ENCODE measurements at regions of chr7 and their contacts with region 1.

Region 1: DNA sequence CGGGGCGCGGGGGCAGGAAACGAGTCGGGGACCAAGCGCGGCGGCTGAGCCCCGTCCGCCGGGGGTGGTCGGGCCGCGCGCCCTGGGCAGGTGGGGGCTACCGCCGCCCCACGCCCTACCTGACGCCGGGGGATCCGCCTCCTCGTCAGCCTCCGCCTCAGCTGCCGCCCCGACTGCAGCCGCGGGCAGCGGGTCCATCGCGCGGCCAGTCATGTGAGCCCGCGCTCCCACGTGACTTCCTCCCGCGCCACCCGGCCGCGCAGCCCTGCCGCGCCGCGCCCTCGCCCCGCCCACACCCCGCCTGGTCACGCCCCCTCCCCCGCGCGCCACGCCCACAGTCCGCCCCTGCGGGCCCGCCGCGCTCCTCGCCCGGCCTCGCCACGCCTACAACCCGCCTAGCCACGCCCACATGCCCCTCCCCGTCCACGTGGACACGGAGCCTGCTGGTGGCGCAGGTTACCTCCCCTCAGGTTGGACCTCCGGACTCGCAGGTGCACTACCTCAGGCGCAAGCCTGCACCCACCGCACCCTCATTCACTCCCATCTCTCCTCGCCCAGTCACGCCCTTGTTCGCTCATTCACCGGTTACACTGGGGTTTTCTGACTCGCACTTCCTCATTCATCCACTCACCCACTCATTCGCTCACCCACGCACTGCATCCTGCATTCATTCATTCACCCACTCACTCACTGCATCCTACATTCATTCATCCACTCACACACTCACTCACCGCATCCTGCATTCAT is at the start of gene SNX8:
- DNase-seq: peak; percentile 98
- ATAC-seq: peak; percentile 78
- H3K4me3 ChIP-seq: peak within 1 kb of the TSS; percentile 67 to 94 (median 81)
- H3K4me3 Mint-ChIP-seq: no peak within 1 kb of the TSS
- H3K27ac ChIP-seq: peak within 1 kb of the TSS; percentile 95 to 96
- H3K27ac Mint-ChIP-seq: peak within 1 kb of the TSS; percentile 97
- H3K4me1 ChIP-seq: peaks cover 30 to 58% of the 10 kb centered on the region in 2 donors
- H3K4me1 Mint-ChIP-seq: peaks cover 39% of the 10 kb centered on the region
- H3K27me3 ChIP-seq: no peaks in the 10 kb centered on the region
- H3K27me3 Mint-ChIP-seq: no peaks in the 10 kb centered on the region
- CTCF ChIP-seq: no peak
- total RNA-seq, gene SNX8: 126 and 144 TPM in 2 replicates

Region 2: DNA sequence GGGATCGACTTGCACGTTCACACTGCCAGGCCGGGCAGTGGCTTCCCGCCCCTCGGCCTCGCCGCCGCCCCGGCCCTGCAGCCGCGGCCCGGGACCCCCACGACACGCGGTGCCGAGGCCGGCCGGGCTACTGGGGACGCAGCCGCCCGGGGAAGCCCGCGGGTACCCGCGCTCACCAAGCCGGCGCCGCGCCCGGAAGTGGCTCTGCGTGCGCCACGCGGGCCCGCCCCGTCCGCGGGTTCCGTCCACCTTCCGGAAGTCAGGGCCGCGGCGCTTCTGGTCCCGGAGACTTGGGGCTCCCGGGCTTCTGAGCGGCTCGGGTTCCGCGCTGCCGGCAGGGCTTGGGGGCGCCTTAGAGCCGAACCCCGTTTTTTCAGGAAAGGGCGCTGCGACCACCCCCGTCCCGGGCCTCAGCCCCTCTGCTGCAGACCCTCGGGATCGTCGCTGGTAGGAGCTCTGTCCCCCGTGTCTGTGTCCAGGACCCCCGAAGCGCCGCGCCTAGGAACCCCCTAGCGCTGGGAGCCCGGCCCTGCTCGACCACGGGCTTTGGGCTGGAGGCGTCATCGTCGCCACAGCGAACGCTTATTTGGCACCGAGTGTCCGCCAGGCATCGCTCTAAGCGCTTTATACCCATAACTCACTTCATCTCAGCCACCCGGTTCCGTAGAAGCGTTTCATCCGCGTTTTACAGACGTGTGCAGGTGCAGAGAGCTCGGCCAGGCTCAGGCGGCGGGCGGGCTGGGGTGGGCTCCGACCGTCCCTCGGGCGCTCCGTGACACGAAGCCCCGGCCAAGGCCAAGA is 744.3 kb before region 1 on chr7 and contains the start of gene PSMG3:
- CTCF ChIA-PET with region 1: no interaction called
- POLR2A ChIA-PET with region 1: no interaction called
- intact Hi-C with region 1: loop called (anchors 1 kb)
- DNase-seq: peak; percentile 92
- ATAC-seq: peak; percentile 91
- H3K4me3 ChIP-seq: peak within 1 kb of the TSS; percentile 18 to 87 (median 80)
- H3K4me3 Mint-ChIP-seq: peak within 1 kb of the TSS; percentile 90
- H3K27ac ChIP-seq: peak within 1 kb of the TSS; percentile 84 to 89
- H3K27ac Mint-ChIP-seq: peak within 1 kb of the TSS; percentile 91
- H3K4me1 ChIP-seq: peaks cover 12 to 24% of the 10 kb centered on the region in 2 donors
- H3K4me1 Mint-ChIP-seq: peaks cover 20% of the 10 kb centered on the region
- H3K27me3 ChIP-seq: no peaks in the 10 kb centered on the region
- H3K27me3 Mint-ChIP-seq: no peaks in the 10 kb centered on the region
- CTCF ChIP-seq: peak; percentile 30
- total RNA-seq, gene PSMG3: 27.4 and 28.6 TPM in 2 replicates

Region 3: GRCh38 chr7:2190531-2190930 is 123.9 kb before region 1 on chr7:
- CTCF ChIA-PET with region 1: no interaction called
- POLR2A ChIA-PET with region 1: no interaction called
- intact Hi-C with region 1: no loop called
- DNase-seq: no peak
- ATAC-seq: no peak
- H3K4me3 ChIP-seq: no peak overlapping the region
- H3K4me3 Mint-ChIP-seq: no peak overlapping the region
- H3K27ac ChIP-seq: no peak overlapping the region
- H3K27ac Mint-ChIP-seq: no peak overlapping the region
- H3K4me1 ChIP-seq: no peaks in the 10 kb centered on the region
- H3K4me1 Mint-ChIP-seq: no peaks in the 10 kb centered on the region
- H3K27me3 ChIP-seq: no peaks in the 10 kb centered on the region
- H3K27me3 Mint-ChIP-seq: no peaks in the 10 kb centered on the region
- CTCF ChIP-seq: no peak

Region 4: GRCh38 chr7:2261611-2262010 is 52.8 kb before region 1 on chr7:
- CTCF ChIA-PET with region 1: interaction called, 4 read pairs
- POLR2A ChIA-PET with region 1: interaction called, 6 read pairs
- intact Hi-C with region 1: loop called (anchors 1 kb)
- DNase-seq: peak; percentile 96
- ATAC-seq: peak; percentile 68
- H3K4me3 ChIP-seq: peak overlapping the region; percentile 18 to 44 (median 34)
- H3K4me3 Mint-ChIP-seq: peak overlapping the region; percentile 85
- H3K27ac ChIP-seq: peak overlapping the region; percentile 96 to 98
- H3K27ac Mint-ChIP-seq: peak overlapping the region; percentile 97
- H3K4me1 ChIP-seq: peaks cover 25 to 44% of the 10 kb centered on the region in 2 donors
- H3K4me1 Mint-ChIP-seq: peaks cover 40% of the 10 kb centered on the region
- H3K27me3 ChIP-seq: no peaks in the 10 kb centered on the region
- H3K27me3 Mint-ChIP-seq: no peaks in the 10 kb centered on the region
- CTCF ChIP-seq: no peak

Region 5: DNA sequence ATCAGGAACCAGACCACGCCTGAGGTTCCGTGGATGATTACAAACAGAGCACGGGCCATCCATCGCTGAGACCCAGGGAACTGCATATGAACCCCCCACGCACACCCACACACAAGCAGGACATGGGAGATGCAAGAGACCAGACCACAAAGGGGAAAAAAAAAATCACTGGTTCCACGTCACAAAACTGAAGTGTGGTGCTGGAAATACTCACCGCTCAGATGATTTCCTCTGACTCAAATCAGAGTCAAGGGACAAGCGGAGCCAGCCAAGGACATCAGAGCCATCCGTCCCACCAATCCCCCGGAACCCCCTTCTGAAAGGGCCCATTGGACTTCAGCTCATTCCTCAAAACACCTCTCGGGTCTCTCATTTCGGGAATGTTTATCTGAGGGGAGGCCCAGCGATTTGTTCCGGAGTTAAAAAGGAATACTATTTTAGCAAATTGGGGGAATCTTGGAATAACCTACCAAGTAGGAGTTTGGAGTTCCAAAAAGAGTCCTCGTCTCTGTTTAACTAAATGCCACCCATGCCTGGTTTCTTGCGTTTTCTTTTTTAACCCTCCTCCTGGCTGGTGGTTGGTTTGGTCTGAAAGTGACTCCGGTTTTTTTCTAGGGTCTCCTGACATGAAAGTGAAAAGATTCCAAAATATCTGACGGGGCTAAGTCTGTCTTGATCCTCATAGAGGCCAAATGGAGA is 15.1 kb before region 1 on chr7:
- CTCF ChIA-PET with region 1: interaction called, 4 read pairs
- POLR2A ChIA-PET with region 1: interaction called, 3 read pairs
- intact Hi-C with region 1: loop called (anchors 1 kb)
- DNase-seq: peak; percentile 83
- ATAC-seq: peak; percentile 65
- H3K4me3 ChIP-seq: peak overlapping the region in 4 of 5 experiments; percentile 16 to 55 (median 35)
- H3K4me3 Mint-ChIP-seq: peak overlapping the region; percentile 89
- H3K27ac ChIP-seq: peak overlapping the region; percentile 84 to 86
- H3K27ac Mint-ChIP-seq: peak overlapping the region; percentile 97
- H3K4me1 ChIP-seq: peaks cover 58 to 69% of the 10 kb centered on the region in 2 donors
- H3K4me1 Mint-ChIP-seq: peaks cover 67% of the 10 kb centered on the region
- H3K27me3 ChIP-seq: no peaks in the 10 kb centered on the region
- H3K27me3 Mint-ChIP-seq: no peaks in the 10 kb centered on the region
- CTCF ChIP-seq: no peak

Region 6: GRCh38 chr7:2529161-2530070 is 215.0 kb after region 1 on chr7:
- CTCF ChIA-PET with region 1: no interaction called
- POLR2A ChIA-PET with region 1: interaction called, 11 read pairs
- intact Hi-C with region 1: loop called (anchors 5 kb)
- DNase-seq: peak; percentile 94
- ATAC-seq: peak; percentile 65
- H3K4me3 ChIP-seq: peak overlapping the region in 4 of 5 experiments; percentile 38 to 52 (median 43)
- H3K4me3 Mint-ChIP-seq: peak overlapping the region; percentile 90
- H3K27ac ChIP-seq: peak overlapping the region; percentile 97
- H3K27ac Mint-ChIP-seq: peak overlapping the region; percentile 99
- H3K4me1 ChIP-seq: peaks cover 66 to 74% of the 10 kb centered on the region in 2 donors
- H3K4me1 Mint-ChIP-seq: peaks cover 67% of the 10 kb centered on the region
- H3K27me3 ChIP-seq: no peaks in the 10 kb centered on the region
- H3K27me3 Mint-ChIP-seq: no peaks in the 10 kb centered on the region
- CTCF ChIP-seq: no peak

Measured in B cell (primary cell).